ENCODE measurements at regions of chr17 and their contacts with region 1.

Region 1: GRCh38 chr17:66301797-66302741 is at the start of gene PRKCA:
- DNase-seq: peak; percentile 79 to 84 (median 80)
- ATAC-seq: peak; percentile 35
- H3K4me3 ChIP-seq: peak within 1 kb of the TSS; percentile 75
- H3K27ac ChIP-seq: peak within 1 kb of the TSS; percentile 68
- H3K4me1 ChIP-seq: peaks cover 17 to 28% of the 10 kb centered on the region in 2 experiments; a peak in 4 of 5 replicates
- H3K27me3 ChIP-seq: no peaks in the 10 kb centered on the region
- CTCF ChIP-seq: no peak
- EP300 ChIP-seq: no peak
- POLR2A ChIP-seq: no peak; the same call in 1 of the 2 replicates
- RAD21 ChIP-seq: no peak
- polyA plus RNA-seq, gene PRKCA: 3.2 to 5.3 TPM

Region 2: DNA sequence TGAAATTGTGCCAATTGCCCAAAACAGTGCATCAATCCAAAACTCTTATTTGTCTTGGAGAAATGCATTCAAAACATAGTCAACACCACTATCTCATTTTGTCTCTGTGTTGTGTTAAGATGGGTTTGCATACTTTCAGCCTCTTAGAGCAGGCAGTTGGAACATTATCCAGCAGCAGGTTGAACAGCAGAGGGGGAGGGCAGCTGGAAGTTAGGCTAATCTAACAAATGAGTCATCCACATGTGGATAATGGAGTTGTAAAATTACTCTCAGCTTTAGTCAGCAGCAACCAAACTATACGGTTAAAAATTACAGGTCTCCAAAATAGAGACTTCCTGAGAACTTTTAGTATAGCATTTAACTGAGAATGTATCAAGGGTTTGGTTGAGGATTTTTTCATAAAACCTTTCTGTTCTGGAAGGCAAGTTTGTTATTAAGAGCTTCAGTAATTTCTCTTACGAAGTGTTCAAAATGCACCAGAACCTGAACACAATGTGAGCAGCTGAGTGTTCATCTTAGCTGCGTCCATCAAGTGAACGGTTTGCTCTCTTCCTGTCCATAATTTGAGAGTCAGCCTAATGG is 46.6 kb after region 1 on chr17:
- CTCF ChIA-PET with region 1: no interaction called
- POLR2A ChIA-PET with region 1: no interaction called
- in situ Hi-C with region 1: no loop called
- intact Hi-C with region 1: loop called (anchors 2 kb)
- DNase-seq: peak; percentile 59 to 88 (median 70)
- ATAC-seq: peak; percentile 84
- H3K4me3 ChIP-seq: no peak overlapping the region
- H3K27ac ChIP-seq: peak overlapping the region; percentile 91
- H3K4me1 ChIP-seq: peaks cover 24 to 78% of the 10 kb centered on the region in 2 experiments
- H3K27me3 ChIP-seq: no peaks in the 10 kb centered on the region
- CTCF ChIP-seq: no peak; a peak in 1 of 6 replicates
- EP300 ChIP-seq: peak; percentile 94
- POLR2A ChIP-seq: no peak
- RAD21 ChIP-seq: no peak; a peak in 1 of 4 replicates

Region 3: DNA sequence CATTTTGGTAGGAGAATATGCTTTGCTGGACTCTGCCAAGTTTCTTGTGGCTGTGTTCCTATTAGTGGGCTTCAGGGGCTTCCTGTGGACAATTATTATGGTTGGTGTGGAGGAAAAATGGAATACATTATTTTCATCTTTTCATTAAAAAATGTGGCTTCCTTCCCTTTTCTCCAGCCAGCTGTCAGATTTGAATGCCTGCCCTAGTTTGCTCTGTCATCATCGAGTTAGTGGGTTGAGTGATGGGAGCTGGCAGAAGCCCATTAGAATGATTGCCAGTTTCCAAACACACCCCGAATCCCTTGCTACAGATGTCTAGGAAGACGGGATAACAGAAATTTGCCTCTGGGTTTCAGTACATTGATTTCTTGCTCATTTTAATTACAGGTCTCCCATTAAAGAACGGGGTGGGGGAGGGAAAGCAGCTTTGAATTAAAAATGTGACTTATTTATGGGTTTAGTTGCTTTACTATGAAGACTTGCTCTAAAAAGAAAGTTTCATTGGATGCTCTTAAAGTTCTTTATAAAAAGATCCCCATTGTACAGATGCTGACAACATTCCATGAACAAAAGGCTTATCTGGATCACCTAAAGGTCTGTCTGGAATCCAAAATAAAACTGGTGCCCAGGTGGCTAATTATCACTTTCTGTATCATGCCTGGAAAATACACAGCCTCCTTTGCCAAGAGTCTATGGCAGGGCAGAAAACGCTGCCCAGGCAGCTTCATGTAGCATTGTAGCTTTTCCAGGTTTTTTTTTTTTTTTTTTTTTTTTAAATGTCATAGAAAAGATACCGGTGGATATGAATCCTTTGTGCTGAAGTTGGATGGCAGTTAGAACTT is 104.0 kb after region 1 on chr17:
- CTCF ChIA-PET with region 1: no interaction called
- POLR2A ChIA-PET with region 1: no interaction called
- in situ Hi-C with region 1: no loop called
- intact Hi-C with region 1: loop called (anchors 10 kb)
- DNase-seq: no peak
- ATAC-seq: no peak
- H3K4me3 ChIP-seq: no peak overlapping the region
- H3K27ac ChIP-seq: no peak overlapping the region
- H3K4me1 ChIP-seq: peaks cover 2 to 15% of the 10 kb centered on the region in 2 experiments; a peak in 3 of 5 replicates
- H3K27me3 ChIP-seq: no peaks in the 10 kb centered on the region
- CTCF ChIP-seq: no peak
- EP300 ChIP-seq: no peak
- POLR2A ChIP-seq: no peak
- RAD21 ChIP-seq: no peak

Region 4: GRCh38 chr17:66426397-66427033 is 124.4 kb after region 1 on chr17:
- CTCF ChIA-PET with region 1: no interaction called
- POLR2A ChIA-PET with region 1: no interaction called
- in situ Hi-C with region 1: no loop called
- intact Hi-C with region 1: loop called (anchors 5 kb)
- DNase-seq: peak; percentile 16 to 56 (median 40)
- ATAC-seq: peak; percentile 93
- H3K4me3 ChIP-seq: no peak overlapping the region
- H3K27ac ChIP-seq: no peak overlapping the region
- H3K4me1 ChIP-seq: no peaks in the 10 kb centered on the region; a peak in 3 of 5 replicates
- H3K27me3 ChIP-seq: no peaks in the 10 kb centered on the region
- CTCF ChIP-seq: peak; percentile 34 to 57 (median 50); a peak in 5 of 6 replicates
- EP300 ChIP-seq: no peak
- POLR2A ChIP-seq: no peak
- RAD21 ChIP-seq: peak; percentile 43 to 71

Region 5: GRCh38 chr17:66466840-66467367 is 164.8 kb after region 1 on chr17:
- CTCF ChIA-PET with region 1: no interaction called
- POLR2A ChIA-PET with region 1: no interaction called
- in situ Hi-C with region 1: no loop called
- intact Hi-C with region 1: loop called (anchors 5 kb)
- DNase-seq: peak; percentile 36 to 67 (median 42)
- ATAC-seq: peak; percentile 73
- H3K4me3 ChIP-seq: no peak overlapping the region
- H3K27ac ChIP-seq: peak overlapping the region; percentile 54
- H3K4me1 ChIP-seq: peaks cover 19 to 49% of the 10 kb centered on the region in 2 experiments
- H3K27me3 ChIP-seq: no peaks in the 10 kb centered on the region
- CTCF ChIP-seq: no peak
- EP300 ChIP-seq: peak; percentile 47; the same call in 1 of the 2 replicates
- POLR2A ChIP-seq: no peak
- RAD21 ChIP-seq: no peak

Region 6: DNA sequence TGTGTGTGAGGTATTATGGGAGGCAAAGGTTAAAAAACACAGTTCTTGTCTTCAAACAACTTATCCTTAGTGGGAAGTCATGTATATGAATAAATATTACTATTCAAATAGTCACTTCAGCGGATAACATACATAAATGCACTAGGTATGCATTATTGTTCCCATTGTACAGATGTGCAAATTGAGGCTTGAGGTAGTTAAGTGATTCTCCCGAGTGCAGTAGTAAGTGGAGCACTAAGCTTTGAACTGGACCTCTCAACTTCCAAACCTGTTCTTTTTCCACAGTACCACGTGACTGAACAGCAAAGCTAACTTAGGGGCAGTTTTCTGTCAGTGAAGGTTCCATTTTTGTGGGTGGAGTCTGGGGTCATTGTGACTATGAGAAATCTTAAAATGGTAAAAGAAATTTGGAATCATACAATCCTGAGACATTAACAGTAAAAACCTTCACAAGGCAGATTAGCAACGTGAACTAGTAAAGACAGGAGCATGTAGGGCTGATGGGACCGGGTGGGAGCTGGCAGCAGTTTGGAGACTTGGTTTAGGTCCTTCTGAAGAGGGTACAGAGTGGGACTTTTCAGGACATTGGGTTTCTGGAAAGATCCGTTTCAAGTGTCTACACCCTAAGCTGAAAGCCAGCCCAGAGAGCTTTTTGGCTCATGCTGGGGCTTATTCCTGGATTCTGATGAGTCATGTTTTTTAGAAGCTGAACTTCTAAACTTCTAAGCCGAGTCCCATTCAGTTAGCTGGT is 205.2 kb after region 1 on chr17:
- CTCF ChIA-PET with region 1: no interaction called
- POLR2A ChIA-PET with region 1: no interaction called
- in situ Hi-C with region 1: no loop called
- intact Hi-C with region 1: loop called (anchors 2 kb)
- DNase-seq: peak; percentile 56 to 78 (median 70)
- ATAC-seq: peak; percentile 79
- H3K4me3 ChIP-seq: no peak overlapping the region
- H3K27ac ChIP-seq: peak overlapping the region; percentile 86
- H3K4me1 ChIP-seq: peaks cover 25 to 46% of the 10 kb centered on the region in 2 experiments
- H3K27me3 ChIP-seq: no peaks in the 10 kb centered on the region
- CTCF ChIP-seq: no peak
- EP300 ChIP-seq: peak; percentile 48
- POLR2A ChIP-seq: no peak
- RAD21 ChIP-seq: no peak

Measured in K562 (cell line).